Sigmoid colon (tissue), 7 donors: ENCODE measurements at regions of chr1 and their contacts with region 1.

Region 1: DNA sequence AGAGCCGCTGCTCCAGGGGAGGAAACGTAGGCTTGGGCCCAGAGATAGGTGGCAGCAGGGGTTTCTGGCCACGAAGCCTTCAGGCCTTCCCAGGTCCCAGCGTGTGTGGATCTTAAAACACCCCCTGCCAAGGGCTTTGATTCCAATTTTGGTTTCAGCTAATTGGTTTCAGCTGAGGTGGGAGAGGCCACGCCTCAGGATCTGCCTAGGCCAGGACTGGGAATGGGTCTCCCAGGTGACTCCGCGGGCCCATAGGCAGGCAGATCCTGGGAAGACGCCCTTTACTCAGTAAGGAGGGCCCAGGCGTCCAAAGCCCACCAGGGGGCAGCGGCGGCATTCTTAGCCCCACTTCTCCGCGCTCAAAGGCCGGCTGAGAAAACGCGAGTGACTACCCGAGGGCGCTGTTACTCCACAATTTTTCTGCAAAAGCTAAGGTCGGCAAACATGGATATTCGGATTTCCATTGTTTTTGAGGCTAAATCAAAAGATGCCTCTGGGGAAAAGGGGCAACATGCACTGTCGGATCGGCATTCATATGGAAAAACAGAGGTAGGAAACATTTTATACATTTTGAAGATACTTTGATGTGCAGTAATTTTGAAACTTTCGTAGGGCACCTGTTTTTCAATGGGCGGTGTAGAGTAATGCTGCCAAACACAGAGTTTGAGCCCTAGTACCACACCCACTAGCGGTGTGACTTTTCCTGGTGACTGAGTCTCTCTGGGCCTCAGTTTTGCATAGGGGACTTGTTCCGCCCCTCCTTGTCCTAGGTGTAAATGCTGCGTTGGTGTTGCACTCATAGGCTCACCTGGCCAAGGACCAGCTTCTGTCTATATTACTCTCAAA is 31.8 kb upstream of the BCL10 start:
- DNase-seq: peak; percentile 94
- H3K4me3 ChIP-seq: no peak overlapping the region
- H3K27ac ChIP-seq: peak overlapping the region in 1 of 4 donors; percentile 14
- H3K4me1 ChIP-seq: peaks cover 0 to 8% (median 3%) of the 10 kb centered on the region in 4 donors
- H3K27me3 ChIP-seq: no peaks in the 10 kb centered on the region
- CTCF ChIP-seq: peak; percentile 95 to 99 (median 97)
- EP300 ChIP-seq: no peak
- POLR2A ChIP-seq: no peak

Region 2: DNA sequence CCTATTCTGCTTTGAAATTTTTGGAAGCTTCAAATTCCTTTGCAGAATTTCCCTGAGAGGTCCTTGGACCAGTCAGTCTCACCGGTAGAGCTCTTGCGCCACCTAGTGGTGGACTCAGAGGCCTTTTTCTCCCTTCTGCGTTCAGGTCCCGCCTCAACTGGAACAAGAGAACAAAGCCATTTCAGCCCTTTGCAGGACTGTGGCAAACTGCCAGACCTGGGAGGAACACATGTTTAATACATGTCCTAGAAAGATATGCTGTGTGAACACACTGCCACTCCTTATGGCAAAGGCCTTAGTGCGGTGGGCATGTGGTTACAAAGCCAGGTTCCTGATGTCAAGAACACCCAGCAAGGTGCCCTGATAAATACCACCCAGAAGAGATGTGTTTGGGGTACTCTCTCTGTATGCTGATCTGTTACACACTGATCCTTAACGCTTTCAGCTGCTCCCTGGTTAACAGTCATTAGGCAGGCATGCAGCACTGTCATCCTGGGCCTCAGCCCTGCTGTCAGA is 535.7 kb before region 1 on chr1:
- intact Hi-C with region 1: no loop called
- DNase-seq: peak; percentile 91
- H3K4me3 ChIP-seq: no peak overlapping the region
- H3K27ac ChIP-seq: no peak overlapping the region
- H3K4me1 ChIP-seq: no peaks in the 10 kb centered on the region
- H3K27me3 ChIP-seq: no peaks in the 10 kb centered on the region
- CTCF ChIP-seq: peak; percentile 73 to 90 (median 80)
- EP300 ChIP-seq: no peak
- POLR2A ChIP-seq: no peak

Region 3: GRCh38 chr1:85158910-85159309 is 149.3 kb before region 1 on chr1:
- intact Hi-C with region 1: no loop called
- DNase-seq: no peak
- H3K4me3 ChIP-seq: no peak overlapping the region
- H3K27ac ChIP-seq: no peak overlapping the region
- H3K4me1 ChIP-seq: peaks cover 0 to 10% (median 5%) of the 10 kb centered on the region in 4 donors
- H3K27me3 ChIP-seq: no peaks in the 10 kb centered on the region
- CTCF ChIP-seq: no peak
- EP300 ChIP-seq: no peak
- POLR2A ChIP-seq: no peak

Region 4: DNA sequence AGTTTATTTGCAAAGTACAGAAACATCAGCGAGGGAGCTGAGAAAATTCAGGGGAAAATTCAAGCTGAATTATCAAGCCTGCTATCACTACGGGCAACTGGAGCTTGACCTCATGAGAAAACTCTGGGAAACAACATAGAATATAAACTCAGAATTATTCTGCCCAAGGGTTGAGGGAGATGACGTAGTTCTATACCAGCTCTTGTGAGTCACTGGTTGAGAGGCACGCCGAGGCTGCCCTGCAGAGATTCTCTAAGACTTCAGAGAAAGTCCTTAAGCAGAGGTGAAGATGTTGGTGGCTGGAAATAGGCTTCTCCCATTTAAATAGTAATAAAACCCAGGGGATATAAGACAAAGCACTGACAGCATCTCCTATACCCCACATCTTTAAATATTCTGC is 119.7 kb before region 1 on chr1:
- intact Hi-C with region 1: no loop called
- DNase-seq: no peak
- H3K4me3 ChIP-seq: peak overlapping the region in 1 of 4 donors; percentile 11
- H3K27ac ChIP-seq: peak overlapping the region in 2 of 4 donors; percentile 65 to 67
- H3K4me1 ChIP-seq: peaks cover 0 to 68% (median 58%) of the 10 kb centered on the region in 4 donors
- H3K27me3 ChIP-seq: no peaks in the 10 kb centered on the region
- CTCF ChIP-seq: no peak
- EP300 ChIP-seq: no peak
- POLR2A ChIP-seq: no peak

Region 5: DNA sequence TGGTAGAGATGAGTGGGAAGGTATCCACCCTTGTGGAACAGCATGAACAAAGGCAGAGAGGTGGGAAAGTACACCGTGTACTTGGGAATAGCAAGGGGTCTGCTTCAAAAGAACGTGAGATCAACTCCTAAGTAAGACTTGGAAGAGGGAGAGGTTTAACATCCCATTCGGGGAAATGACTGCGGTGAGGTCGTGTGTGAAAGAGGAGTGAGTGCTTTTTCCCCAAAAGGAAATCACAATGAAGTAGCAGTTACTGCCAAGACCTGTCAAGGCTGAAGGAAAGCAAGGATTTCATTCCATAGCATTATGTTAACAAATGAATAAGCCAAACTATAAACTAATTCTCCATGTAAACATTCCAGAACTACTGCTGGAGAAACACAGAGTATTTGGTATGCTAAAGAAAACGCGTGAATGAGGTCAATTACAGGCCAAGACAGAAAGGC is 87.4 kb before region 1 on chr1:
- intact Hi-C with region 1: no loop called
- DNase-seq: no peak
- H3K4me3 ChIP-seq: no peak overlapping the region
- H3K27ac ChIP-seq: peak overlapping the region; percentile 73 to 85 (median 78)
- H3K4me1 ChIP-seq: peaks cover 0 to 71% (median 65%) of the 10 kb centered on the region in 4 donors
- H3K27me3 ChIP-seq: no peaks in the 10 kb centered on the region
- CTCF ChIP-seq: no peak
- EP300 ChIP-seq: peak in 1 of 4 donors; percentile 86
- POLR2A ChIP-seq: no peak

Region 6: DNA sequence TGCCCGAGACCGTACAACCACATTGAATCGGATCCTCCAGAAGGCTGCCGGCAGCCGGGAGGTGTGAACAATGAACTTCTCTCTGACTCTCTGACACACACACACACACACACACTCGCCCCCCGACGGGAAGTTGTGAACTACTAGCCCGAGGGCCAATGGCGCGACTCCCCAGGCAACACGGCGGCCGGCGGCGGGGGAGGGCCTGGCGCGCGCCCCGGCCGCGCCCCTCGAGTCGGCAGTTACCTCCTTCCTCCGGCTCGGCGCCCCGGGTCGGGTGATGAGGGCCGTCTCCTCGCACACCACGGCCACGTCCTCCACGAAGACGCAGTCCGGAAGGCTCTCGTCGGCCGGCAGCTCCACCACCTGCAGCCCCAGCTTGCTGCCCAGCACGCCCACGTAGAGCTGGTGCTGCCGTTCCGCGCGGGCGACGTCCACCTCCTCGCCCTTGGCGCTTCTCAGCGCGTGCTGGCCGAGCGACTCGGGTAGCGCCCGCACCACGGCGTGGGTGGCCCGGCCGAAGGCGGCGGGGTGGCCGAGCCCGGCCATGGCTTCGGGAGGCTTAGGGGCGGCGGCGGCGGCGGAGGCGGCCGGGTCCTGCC is 156.4 kb after region 1 on chr1:
- intact Hi-C with region 1: loop called (anchors 2 kb)
- DNase-seq: peak; percentile 81
- H3K4me3 ChIP-seq: peak overlapping the region; percentile 53 to 79 (median 72)
- H3K27ac ChIP-seq: peak overlapping the region; percentile 67 to 83 (median 76)
- H3K4me1 ChIP-seq: peaks cover 0 to 35% (median 27%) of the 10 kb centered on the region in 4 donors
- H3K27me3 ChIP-seq: no peaks in the 10 kb centered on the region
- CTCF ChIP-seq: no peak
- EP300 ChIP-seq: no peak
- POLR2A ChIP-seq: no peak

Region 7: GRCh38 chr1:85502625-85503083 is 194.4 kb after region 1 on chr1:
- intact Hi-C with region 1: loop called (anchors 2 kb)
- DNase-seq: peak; percentile 73
- H3K4me3 ChIP-seq: no peak overlapping the region
- H3K27ac ChIP-seq: peak overlapping the region in 1 of 4 donors; percentile 24
- H3K4me1 ChIP-seq: peaks cover 0 to 8% (median 2%) of the 10 kb centered on the region in 4 donors
- H3K27me3 ChIP-seq: no peaks in the 10 kb centered on the region
- CTCF ChIP-seq: peak in 3 of 4 experiments; percentile 41 to 53 (median 46)
- EP300 ChIP-seq: no peak
- POLR2A ChIP-seq: no peak

Region 8: DNA sequence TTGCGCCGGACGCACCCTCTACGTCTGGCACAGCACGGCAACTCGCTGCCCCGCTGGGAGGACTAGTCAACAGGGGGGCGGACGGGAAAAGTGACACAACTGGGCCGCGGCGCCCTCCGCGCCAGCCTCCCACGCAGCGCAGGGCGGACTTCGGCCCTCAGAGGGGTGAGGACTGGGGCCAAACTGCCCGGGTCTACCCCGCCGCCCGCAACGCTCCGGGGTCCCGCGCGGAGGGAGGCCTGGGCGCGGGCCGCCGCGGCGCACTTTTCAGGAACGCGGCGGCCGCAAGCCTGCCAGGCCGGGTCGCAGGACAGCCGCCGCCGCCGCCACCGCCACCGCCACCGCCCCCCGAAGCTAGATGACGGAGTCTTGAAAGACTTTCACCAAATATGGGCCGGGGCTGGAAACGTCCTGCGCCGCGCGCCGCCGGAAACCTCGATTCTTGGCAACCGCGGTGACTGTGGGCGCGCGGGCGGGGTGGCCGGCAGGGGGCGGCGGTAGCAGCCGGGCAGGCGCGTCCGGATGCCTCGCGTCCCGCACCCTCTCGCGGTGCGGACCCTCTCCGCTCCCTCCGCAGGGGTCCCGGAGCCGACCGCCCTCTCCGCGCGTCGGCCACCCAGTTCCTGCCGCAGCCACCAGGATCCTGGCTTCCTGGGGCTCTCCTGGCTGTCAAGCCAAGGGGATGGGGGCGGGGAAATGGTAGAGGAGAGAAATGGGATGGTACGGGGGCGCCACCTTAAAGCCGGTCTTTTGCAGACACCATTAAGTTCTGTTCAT is 268.6 kb after region 1 on chr1:
- intact Hi-C with region 1: loop called (anchors 1 kb)
- DNase-seq: peak; percentile 96
- H3K4me3 ChIP-seq: peak overlapping the region; percentile 67 to 84 (median 75)
- H3K27ac ChIP-seq: peak overlapping the region; percentile 96 to 99 (median 98)
- H3K4me1 ChIP-seq: peaks cover 0 to 42% (median 31%) of the 10 kb centered on the region in 4 donors
- H3K27me3 ChIP-seq: no peaks in the 10 kb centered on the region
- CTCF ChIP-seq: peak in 3 of 4 experiments; percentile 17 to 88 (median 85)
- EP300 ChIP-seq: peak in 1 of 4 donors; percentile 36
- POLR2A ChIP-seq: peak; percentile 40 to 77

Region 9: DNA sequence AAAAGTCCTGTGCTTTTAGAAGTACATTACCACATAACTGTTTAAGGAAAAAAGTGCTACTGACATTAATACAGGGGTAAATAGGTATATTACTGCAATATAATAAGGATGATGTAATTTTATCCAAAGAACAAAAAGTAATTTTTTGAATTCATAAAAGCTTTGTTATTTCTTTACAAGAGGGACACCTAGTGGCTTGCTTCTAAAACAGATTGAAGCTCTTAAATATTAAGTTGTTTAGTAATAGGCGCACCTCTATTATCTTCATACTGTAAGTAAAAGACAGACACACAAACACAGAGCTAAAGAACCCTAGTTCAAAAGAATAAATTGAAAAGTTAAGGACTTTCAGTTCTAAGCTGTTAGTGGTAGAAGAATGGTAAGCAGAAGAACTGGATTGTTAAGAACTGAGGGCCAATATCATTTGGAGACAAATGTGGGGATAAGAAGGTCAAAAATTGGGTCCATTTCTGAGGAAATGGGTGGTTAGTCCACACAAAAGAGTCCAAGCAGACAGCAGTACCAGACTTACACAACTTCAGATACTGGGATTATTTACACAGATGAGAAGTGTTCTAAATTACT is 384.6 kb after region 1 on chr1:
- intact Hi-C with region 1: loop called (anchors 1 kb)
- DNase-seq: no peak
- H3K4me3 ChIP-seq: no peak overlapping the region
- H3K27ac ChIP-seq: no peak overlapping the region
- H3K4me1 ChIP-seq: peaks cover 0 to 4% (median 0%) of the 10 kb centered on the region in 4 donors
- H3K27me3 ChIP-seq: no peaks in the 10 kb centered on the region
- CTCF ChIP-seq: peak in 3 of 4 experiments; percentile 38 to 49 (median 41)
- EP300 ChIP-seq: no peak
- POLR2A ChIP-seq: no peak

Region 10: DNA sequence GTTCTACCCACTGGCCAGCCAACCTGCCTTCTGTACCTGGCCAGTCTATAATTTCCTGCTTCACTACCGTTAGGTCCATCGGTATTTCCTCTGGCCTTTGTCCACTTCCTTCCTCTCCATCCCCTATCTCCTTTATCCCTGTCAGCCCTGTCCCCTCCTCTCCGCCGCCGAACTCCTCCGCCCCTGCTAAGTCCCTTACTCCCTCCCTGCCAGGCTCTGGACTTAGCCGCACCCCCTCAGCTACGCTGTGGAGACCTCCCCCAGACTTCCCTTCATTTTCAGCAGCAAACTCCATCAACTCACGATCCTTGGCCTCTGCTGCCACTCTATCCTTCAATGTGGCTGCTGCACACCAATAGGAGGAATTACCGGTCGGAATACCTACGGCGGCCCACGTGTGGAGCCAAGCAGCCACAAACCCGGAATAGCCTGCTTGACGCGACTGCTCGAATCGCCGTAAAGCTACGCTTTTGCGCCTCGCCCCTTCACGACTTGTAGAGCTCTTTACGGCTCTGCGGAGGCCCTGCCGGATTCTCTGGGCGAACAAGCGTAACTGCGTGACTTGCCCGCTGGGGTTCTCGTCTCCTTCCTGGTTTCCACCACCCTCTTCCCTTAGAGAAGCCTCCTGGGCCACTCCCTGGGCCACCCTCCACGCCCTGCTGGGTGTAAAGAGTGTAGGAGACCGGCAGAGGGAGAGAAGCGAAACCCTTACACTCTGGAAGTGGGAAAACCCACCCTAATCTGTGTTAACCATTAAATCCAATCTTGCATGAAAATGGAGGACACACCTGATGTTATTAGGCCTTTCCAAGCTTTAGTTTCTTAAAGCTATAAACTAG is 400.0 kb after region 1 on chr1 and contains the start of gene ZNHIT6:
- intact Hi-C with region 1: loop called (anchors 5 kb)
- DNase-seq: peak; percentile 94
- H3K4me3 ChIP-seq: peak within 1 kb of the TSS; percentile 62 to 74 (median 70)
- H3K27ac ChIP-seq: peak within 1 kb of the TSS; percentile 78 to 86 (median 82)
- H3K4me1 ChIP-seq: peaks cover 0 to 23% (median 16%) of the 10 kb centered on the region in 4 donors
- H3K27me3 ChIP-seq: no peaks in the 10 kb centered on the region
- CTCF ChIP-seq: peak in 3 of 4 experiments; percentile 13 to 41 (median 35)
- EP300 ChIP-seq: no peak
- POLR2A ChIP-seq: peak in 1 of 2 donors; percentile 16
- total RNA-seq, gene ZNHIT6: 12.5 to 20.0 (median 15.8) TPM

Region 11: DNA sequence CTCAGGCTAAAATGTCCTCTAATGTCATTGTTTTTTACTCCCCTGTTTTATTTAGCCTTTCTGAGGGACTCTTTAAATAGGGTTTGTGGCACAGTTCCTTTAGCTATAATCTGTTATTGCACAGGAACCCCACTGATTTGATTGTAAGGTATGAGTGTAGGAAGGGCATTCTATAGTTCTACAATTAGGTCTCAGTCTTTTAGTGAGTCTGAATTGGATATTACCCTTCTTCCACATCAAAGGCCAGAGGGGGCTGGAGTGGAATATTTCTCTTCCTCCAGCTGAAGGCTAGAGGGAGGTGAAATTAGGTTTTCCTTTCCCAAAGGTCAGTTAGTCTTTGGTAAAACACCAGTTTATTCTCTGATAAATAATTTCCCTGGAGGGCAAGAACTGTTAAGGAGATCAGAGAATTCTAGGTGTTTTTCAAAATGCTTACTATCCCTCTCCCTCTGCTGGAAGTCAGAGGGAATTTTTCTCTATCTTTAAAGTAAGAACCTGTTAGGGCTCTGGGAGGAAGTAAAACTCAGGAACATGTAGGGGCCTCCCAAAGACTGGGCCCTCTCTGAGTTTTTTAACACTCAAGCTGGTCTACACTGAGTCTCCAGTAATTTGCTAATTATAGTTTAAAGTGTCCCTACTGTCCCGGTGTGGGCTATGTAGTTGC is 576.3 kb after region 1 on chr1:
- intact Hi-C with region 1: loop called (anchors 10 kb)
- DNase-seq: no peak
- H3K4me3 ChIP-seq: no peak overlapping the region
- H3K27ac ChIP-seq: no peak overlapping the region
- H3K4me1 ChIP-seq: no peaks in the 10 kb centered on the region
- H3K27me3 ChIP-seq: no peaks in the 10 kb centered on the region
- CTCF ChIP-seq: no peak
- EP300 ChIP-seq: no peak
- POLR2A ChIP-seq: no peak